ENCODE measurements at regions of chr14 and their contacts with region 1.

Region 1: GRCh38 chr14:67571272-67571850 is 28.7 kb downstream of the PIGH start:
- DNase-seq: peak; percentile 77
- ATAC-seq: peak; percentile 95
- H3K4me3 Mint-ChIP-seq: no peak overlapping the region
- H3K27ac Mint-ChIP-seq: no peak overlapping the region
- H3K4me1 Mint-ChIP-seq: peaks cover 10% of the 10 kb centered on the region
- H3K27me3 Mint-ChIP-seq: peaks cover 3% of the 10 kb centered on the region

Region 2: GRCh38 chr14:67387195-67387594 is 184.2 kb before region 1 on chr14:
- CTCF ChIA-PET with region 1: no interaction called
- DNase-seq: no peak
- ATAC-seq: no peak
- H3K4me3 Mint-ChIP-seq: no peak overlapping the region
- H3K27ac Mint-ChIP-seq: no peak overlapping the region
- H3K4me1 Mint-ChIP-seq: peaks cover 3% of the 10 kb centered on the region
- H3K27me3 Mint-ChIP-seq: no peaks in the 10 kb centered on the region

Region 3: DNA sequence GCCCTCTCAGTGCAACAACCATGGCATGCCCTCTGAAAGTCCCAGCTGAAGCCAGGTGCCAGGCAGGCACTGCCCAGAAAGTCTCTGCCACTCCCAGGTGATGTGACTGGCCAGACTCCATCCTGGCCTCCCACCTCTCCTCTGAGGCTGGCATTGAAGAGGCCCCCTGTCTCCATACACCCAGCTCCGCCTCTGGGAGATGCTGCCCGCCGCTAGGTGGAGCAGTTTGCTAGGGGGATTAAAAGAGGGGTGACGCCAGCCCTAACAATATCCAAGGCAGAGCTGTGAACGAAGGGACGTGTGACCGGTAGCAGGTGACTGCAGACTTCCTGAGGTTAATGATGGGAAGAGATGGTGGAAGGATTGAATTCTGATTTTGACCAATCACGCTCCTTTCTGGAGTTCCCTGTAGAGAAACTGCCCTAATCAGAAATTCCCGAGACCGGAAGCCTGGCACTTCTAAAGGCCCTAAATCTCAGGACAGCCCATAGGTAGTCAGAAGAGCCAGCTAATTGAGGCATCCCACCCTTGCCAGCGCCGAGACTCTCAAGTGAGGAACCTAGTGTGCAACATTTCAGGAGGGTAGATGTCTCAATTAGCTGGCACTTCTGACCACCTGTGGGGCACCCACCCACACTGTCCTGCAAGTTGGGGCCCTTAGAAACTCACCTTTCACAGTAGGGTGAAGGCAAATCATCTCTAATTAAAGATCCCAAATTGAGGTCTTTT is 151.1 kb before region 1 on chr14:
- CTCF ChIA-PET with region 1: interaction called, 145 read pairs
- DNase-seq: peak; percentile 63
- ATAC-seq: peak; percentile 67
- H3K4me3 Mint-ChIP-seq: no peak overlapping the region
- H3K27ac Mint-ChIP-seq: no peak overlapping the region
- H3K4me1 Mint-ChIP-seq: peaks cover 7% of the 10 kb centered on the region
- H3K27me3 Mint-ChIP-seq: peaks cover 16% of the 10 kb centered on the region

Region 4: GRCh38 chr14:67526676-67527459 is 44.5 kb before region 1 on chr14:
- CTCF ChIA-PET with region 1: interaction called, 61 read pairs
- DNase-seq: peak; percentile 58
- ATAC-seq: peak; percentile 90
- H3K4me3 Mint-ChIP-seq: no peak overlapping the region
- H3K27ac Mint-ChIP-seq: no peak overlapping the region
- H3K4me1 Mint-ChIP-seq: no peaks in the 10 kb centered on the region
- H3K27me3 Mint-ChIP-seq: peaks cover 73% of the 10 kb centered on the region

Region 5: DNA sequence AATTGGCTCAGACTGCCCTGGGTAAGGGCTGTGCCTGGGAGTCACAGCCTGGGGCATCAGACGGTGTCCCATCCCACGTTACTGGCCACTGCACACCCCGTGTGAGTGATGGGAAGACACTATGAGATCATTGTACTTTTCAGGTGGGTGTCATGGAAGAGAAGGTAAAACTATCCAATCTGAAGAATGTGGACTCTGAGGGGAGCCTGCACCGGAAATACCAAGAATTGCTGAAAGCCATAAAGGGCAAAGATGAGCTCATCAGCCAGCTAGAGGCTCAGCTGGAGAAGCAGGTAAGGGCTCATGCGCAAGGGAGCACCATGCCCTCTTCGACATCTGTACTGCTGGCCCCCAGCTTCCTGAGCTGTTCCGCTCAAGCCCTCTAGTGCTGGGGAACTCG is 14.2 kb before region 1 on chr14:
- CTCF ChIA-PET with region 1: interaction called, 12 read pairs
- DNase-seq: no peak
- ATAC-seq: no peak
- H3K4me3 Mint-ChIP-seq: no peak overlapping the region
- H3K27ac Mint-ChIP-seq: no peak overlapping the region
- H3K4me1 Mint-ChIP-seq: peaks cover 3% of the 10 kb centered on the region
- H3K27me3 Mint-ChIP-seq: peaks cover 17% of the 10 kb centered on the region

Region 6: GRCh38 chr14:67589204-67589770 is 17.9 kb after region 1 on chr14:
- CTCF ChIA-PET with region 1: interaction called, 18 read pairs
- DNase-seq: no peak
- ATAC-seq: no peak
- H3K4me3 Mint-ChIP-seq: no peak overlapping the region
- H3K27ac Mint-ChIP-seq: no peak overlapping the region
- H3K4me1 Mint-ChIP-seq: no peaks in the 10 kb centered on the region
- H3K27me3 Mint-ChIP-seq: no peaks in the 10 kb centered on the region

Measured in activated CD8-positive, alpha-beta memory T cell treated with anti-CD3 and anti-CD28 coated beads, Interleukin-2, amount 10 ng/mL, durations not matched to agents 7 days and 5 days (primary cell).